HEK293T (cell line): ENCODE measurements at regions of chr2 and their contacts with region 1.

Region 1: GRCh38 chr2:68044099-68044498 is 18.7 kb downstream of the C1D start:
- DNase-seq: no peak

Region 2: DNA sequence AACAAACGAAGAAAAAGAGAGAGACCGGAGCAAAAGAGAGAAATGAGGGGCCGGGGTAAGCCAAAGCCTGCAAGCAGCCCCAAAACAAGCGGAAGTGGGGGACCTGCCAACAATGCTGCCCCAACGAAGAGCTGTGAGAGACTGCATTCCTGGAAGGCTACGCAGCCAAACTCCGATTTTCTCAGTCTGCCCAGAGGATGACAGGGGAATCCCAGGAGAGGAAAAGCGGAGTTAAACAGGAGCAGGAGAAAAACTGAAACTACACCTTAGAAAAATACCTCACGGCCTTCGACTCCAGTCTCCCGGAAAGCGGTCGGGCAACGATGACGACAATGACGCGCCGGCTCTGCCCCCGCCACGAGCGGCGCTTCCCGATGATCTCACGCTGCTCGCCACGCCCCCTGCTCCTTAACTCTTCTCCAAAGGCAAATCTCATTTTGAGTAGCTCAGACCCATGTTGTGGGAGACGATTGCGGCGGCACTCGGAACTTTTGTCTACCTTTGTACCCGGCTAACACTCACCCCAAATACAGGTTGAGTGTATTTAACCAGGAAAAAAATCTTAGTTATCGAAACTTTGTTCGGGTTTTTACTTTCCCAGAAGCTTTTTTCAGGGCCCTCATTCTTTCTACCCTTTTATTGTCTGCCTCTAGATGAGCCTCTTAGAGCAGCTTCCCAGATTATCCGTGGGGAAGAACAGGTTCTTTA is 18.7 kb after region 1 on chr2 and contains the start of gene C1D:
- CTCF ChIA-PET with region 1: no interaction called
- POLR2A ChIA-PET with region 1: interaction called, 14 read pairs
- DNase-seq: peak; percentile 91

Region 3: DNA sequence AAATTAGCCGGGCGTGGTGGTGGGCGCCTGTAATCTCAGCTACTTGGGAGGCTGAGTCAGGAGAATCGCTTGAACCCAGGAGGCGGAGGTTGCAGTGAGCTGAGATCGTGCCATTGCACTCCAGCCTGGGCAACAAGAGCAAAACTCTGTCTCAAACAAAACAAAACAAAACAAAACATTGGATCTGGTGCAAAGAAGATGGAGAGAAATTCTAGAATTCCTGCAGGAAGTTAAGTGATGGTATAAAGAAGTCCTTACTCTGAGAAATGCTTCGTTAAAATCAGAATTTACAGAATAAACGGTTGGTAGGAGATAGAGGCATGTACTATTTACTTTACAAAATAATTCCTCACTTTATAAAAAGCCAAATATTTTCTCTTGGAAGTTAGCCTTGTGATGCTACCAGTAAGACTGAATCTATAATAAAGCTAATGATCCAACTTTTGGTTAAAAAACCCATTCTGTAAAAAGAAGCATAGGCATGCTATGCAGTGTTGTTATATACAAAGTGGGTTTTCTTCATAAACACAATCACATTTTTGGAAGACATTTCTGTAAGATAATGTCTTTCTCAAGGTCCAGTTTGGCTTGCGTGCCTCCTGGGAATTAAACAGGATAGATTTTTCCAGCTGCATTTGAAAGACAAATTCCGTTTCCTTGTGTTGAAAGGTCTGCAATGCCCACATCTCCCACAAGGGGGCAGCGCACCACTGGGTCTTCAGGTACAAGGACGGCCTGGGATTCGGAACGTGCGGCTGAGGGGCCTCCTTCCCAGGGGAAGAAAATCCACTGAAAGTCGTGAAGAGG is 78.0 kb after region 1 on chr2:
- CTCF ChIA-PET with region 1: no interaction called
- POLR2A ChIA-PET with region 1: no interaction called
- DNase-seq: peak; percentile 84